ENCODE measurements at regions of chr16 and their contacts with region 1.

Region 1: DNA sequence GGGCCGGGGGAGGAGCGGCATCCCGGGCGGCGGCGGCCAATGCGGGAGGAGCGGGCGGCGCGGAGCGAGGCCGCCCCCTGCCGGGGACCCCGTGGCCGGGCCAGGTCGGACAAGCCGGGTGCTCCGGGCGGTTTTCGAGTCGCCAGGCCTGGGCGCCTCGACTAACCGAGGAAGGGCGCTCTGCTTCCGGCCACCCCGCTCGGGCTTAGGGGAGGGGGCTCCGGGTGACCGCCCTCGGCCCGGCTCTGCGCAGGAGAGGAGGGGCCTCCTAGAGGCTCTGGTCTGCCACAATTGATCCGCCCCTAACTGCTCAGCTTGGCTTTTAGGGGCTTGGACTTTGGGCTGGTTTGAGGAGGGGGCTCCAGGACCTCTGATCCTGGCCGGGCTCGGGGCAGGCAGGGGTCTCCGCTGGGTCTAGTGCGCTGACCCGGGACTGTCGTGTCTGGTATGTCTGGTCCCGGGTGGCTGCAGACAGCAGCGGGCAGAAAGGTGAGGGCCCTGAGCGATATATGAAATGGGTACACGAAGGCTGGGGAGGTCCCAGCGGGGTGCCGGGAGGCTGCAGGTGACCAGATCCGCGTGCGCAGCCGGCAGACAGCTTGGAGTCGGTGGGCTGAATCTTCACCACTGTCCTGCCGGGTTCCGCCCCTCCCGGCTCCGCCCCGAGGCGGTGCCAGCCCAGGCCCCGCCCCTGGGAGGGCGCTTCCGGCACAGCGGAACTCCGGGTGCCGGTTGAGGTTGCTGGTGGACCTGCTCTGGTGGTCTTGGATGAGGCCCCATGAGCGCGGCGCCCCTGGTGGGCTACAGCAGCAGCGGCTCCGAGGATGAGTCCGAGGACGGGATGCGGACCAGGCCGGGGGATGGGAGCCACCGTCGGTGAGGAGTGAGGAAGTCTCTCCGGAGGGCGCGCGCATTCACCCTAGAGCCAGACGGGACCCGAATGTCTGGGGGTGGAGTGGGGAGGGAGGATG is at the start of gene USB1:
- DNase-seq: peak; percentile 73
- ATAC-seq: peak; percentile 90
- H3K4me3 ChIP-seq: peak within 1 kb of the TSS; percentile 70
- H3K27ac ChIP-seq: peak within 1 kb of the TSS; percentile 49
- H3K4me1 ChIP-seq: peaks cover 12% of the 10 kb centered on the region
- H3K27me3 ChIP-seq: no peaks in the 10 kb centered on the region
- CTCF ChIP-seq: peak; percentile 75
- POLR2A ChIP-seq: peak; percentile 57
- RAD21 ChIP-seq: peak; percentile 64
- total RNA-seq, gene USB1: 23.1 and 45.9 TPM in 2 replicates

Region 2: GRCh38 chr16:57576429-57576870 is 424.5 kb before region 1 on chr16:
- CTCF ChIA-PET with region 1: interaction called, 3 read pairs
- POLR2A ChIA-PET with region 1: no interaction called
- dilution Hi-C with region 1: no loop called
- in situ Hi-C with region 1: no loop called
- intact Hi-C with region 1: loop called (anchors 5 kb)
- DNase-seq: peak; percentile 55
- ATAC-seq: peak; percentile 98
- H3K4me3 ChIP-seq: no peak overlapping the region
- H3K27ac ChIP-seq: no peak overlapping the region
- H3K4me1 ChIP-seq: no peaks in the 10 kb centered on the region
- H3K27me3 ChIP-seq: peaks cover 19% of the 10 kb centered on the region; the same call in 1 of the 2 replicates
- CTCF ChIP-seq: peak; percentile 96
- POLR2A ChIP-seq: peak; percentile 44; the same call in 1 of the 2 replicates
- RAD21 ChIP-seq: peak; percentile 97

Region 3: DNA sequence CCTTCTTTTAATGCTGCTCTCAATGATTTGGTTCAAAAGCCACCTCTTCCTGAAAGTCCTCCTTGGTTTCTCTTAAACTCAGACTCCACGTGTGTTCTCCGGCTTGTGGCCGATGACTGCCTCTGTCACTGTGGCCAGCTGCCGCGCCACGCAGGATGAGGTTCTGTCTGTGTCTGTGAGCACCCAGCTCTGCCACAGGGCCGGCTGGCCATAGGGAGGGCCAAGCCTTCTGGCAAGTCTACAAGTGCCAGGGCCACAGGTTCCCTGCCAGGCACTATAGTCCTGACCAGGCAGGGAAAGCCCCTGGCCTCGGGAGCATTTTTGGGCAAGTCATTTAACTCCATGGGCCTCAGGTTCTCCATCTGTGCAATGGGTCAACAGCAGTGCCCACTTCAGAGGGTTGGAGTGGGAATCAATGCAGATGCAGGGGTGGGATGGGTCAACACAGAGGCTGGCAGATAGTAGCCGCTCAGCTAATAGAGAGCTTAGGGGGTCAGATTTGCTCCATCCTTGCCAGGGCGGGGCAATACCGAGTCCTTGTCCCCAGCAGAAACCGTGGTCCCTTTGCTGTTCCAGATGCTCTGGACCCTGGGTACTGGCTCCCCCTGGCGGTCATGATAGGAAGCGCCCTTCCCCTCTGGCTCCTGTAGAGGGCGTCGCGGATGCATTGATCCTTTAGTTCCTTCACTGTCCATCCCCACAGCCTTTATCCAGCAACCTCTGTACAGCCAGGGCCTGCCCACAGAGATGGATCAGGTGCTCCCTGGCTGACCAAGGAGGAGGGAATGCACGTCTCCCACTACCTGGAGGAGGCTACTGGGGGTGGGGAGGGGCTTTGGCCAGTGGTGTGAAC is 352.2 kb before region 1 on chr16:
- CTCF ChIA-PET with region 1: no interaction called
- POLR2A ChIA-PET with region 1: no interaction called
- dilution Hi-C with region 1: no loop called
- in situ Hi-C with region 1: no loop called
- intact Hi-C with region 1: loop called (anchors 10 kb)
- DNase-seq: peak; percentile 62
- ATAC-seq: peak; percentile 93
- H3K4me3 ChIP-seq: no peak overlapping the region
- H3K27ac ChIP-seq: no peak overlapping the region
- H3K4me1 ChIP-seq: peaks cover 2% of the 10 kb centered on the region; the same call in 1 of the 2 replicates
- H3K27me3 ChIP-seq: no peaks in the 10 kb centered on the region
- CTCF ChIP-seq: peak; percentile 100; the same call in 1 of the 2 replicates
- POLR2A ChIP-seq: peak; percentile 67
- RAD21 ChIP-seq: peak; percentile 99

Region 4: GRCh38 chr16:57734925-57735754 is 265.9 kb before region 1 on chr16:
- CTCF ChIA-PET with region 1: no interaction called
- POLR2A ChIA-PET with region 1: no interaction called
- dilution Hi-C with region 1: no loop called
- in situ Hi-C with region 1: no loop called
- intact Hi-C with region 1: no loop called
- DNase-seq: peak; percentile 100
- ATAC-seq: peak; percentile 94
- H3K4me3 ChIP-seq: peak overlapping the region; percentile 70
- H3K27ac ChIP-seq: peak overlapping the region; percentile 84
- H3K4me1 ChIP-seq: peaks cover 10% of the 10 kb centered on the region
- H3K27me3 ChIP-seq: no peaks in the 10 kb centered on the region
- CTCF ChIP-seq: no peak
- POLR2A ChIP-seq: peak; percentile 59; the same call in 1 of the 2 replicates
- RAD21 ChIP-seq: no peak

Region 5: DNA sequence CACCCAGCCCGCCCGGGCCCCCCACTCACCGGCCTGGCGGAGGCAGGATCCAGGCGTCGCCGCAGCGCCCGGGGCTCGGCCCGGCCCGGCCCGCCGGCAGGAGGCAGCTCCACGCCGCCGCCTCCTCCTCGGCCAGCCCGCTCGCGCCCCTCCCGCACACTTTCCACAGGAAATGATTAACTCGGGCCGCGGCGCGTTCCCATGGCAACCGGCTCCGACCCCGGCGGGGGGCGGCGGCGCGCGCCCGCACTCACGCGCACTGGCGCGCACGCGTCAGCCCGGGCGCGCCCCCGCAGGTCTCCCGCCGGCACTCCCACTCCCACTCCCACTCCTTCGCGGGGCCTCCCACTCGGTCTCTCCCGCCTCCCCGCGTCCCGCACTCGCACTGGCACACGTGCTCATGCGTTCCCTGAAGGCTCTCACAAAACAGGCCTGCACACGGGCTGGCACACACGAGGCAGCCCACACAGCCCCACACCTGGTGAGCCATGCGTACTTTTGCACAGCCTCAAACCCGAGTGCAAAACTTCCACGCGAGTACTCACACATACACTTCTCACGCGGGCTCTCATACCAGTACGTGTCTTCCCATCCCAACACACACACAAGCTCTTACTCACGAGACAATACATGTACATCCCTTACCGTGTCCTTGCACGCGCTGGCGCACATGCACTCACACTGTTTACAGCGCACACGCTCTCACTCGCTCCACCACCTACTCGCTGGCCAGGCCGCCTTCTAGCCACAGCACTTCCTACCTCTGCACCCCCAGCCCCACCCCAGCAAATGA is 198.5 kb before region 1 on chr16 and contains the start of gene KIFC3:
- CTCF ChIA-PET with region 1: no interaction called
- POLR2A ChIA-PET with region 1: no interaction called
- dilution Hi-C with region 1: no loop called
- in situ Hi-C with region 1: no loop called
- intact Hi-C with region 1: loop called (anchors 2 kb)
- DNase-seq: peak; percentile 72
- ATAC-seq: peak; percentile 75
- H3K4me3 ChIP-seq: peak within 1 kb of the TSS; percentile 84
- H3K27ac ChIP-seq: peak within 1 kb of the TSS; percentile 93
- H3K4me1 ChIP-seq: peaks cover 33% of the 10 kb centered on the region
- H3K27me3 ChIP-seq: no peaks in the 10 kb centered on the region
- CTCF ChIP-seq: peak; percentile 41
- POLR2A ChIP-seq: peak; percentile 68
- RAD21 ChIP-seq: peak; percentile 32; the same call in 1 of the 2 replicates
- total RNA-seq, gene KIFC3: 38.3 and 48.6 TPM in 2 replicates